ENCODE measurements at regions of chr14 and their contacts with region 1.

Region 1: DNA sequence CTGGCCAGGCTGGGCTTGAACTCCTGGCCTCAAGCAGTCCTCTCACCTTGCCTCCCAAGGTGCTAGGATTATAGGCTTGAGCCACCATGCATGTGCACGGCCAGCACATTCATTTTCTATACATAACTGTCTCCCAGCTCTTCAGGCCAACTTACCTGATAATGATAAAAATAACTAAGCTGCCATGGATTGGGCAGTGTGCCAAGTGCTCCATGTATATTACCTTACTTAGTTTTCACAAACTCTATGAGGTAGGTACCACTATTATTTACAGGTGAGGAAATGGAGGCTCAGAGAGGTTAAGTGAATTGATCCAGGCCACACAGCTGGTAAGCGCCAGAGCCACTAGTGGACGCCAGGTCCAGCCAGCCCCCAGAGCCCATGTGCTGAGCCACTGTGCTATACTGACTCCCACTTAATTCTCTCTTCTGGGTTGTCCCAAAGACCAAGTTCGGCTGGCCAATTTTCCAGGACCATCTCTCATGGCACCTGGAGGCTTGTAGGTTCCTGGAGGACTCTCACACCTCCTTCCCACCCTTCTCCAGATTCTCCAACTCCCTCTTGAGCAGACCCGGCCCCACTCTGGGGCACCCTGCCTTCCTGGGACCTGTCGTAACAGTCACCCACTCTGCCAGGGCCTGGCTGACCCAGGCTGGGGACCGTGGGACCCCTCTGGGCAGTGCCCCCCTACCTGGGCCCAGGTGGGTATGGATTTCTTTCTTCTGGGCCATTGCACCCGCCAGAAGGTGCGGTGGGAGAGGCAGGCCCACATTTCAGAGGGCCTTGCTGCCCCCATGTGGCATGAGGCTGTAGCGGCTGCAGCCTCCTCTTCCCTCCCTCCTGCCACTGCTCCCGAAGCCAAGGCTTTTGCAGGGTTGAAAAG is 30.2 kb upstream of the CIPC start:
- DNase-seq: peak; percentile 27
- H3K4me3 Mint-ChIP-seq: no peak overlapping the region
- H3K27ac Mint-ChIP-seq: no peak overlapping the region
- H3K4me1 Mint-ChIP-seq: no peaks in the 10 kb centered on the region
- H3K27me3 Mint-ChIP-seq: peaks cover 14% of the 10 kb centered on the region

Region 2: DNA sequence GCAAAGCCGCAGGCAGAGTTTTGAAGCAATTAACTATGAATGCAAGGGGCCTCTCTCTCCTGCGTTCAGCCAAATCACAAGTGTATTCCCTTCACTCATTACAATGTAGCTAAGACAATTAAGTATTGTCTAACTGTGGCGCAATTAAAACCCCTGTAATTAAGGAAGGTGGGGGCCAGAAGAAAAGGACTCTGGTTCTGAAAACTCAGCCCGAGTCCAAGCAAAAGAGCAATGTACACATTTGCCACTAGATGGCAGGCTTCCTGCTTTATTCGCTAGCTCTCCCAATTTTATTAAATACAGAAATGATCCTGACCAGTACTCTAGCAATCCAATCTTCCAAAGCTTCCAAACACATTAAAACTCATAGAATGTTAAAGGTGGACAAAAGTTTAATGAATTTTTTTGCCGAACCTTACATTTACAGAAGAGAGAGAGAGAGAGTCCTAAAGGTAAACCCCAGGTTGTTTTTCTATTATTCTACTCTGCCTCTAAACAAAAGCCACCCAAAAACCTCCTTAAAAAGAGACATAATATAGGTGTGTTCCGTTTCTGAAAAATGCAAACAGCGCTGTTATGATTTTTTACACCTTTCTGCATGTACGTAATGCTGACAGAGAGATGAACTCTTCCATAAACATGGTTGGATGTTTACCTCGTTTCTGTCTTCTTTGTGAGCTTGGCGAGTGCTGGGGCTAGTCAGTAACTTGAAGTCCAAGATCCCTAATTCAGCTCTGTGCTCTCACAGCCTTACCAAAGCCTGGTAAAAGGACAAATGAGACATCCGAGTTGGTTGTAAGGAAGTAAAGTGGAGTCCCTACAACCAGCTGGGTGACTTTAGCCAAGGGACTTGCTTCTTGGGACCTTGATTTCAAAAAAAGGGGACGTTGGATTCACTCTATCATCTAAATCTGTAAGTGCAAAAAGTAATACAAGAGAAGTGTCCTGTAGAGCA is 357.5 kb before region 1 on chr14:
- intact Hi-C with region 1: loop called (anchors 1 kb)
- DNase-seq: no peak
- H3K4me3 Mint-ChIP-seq: no peak overlapping the region
- H3K27ac Mint-ChIP-seq: no peak overlapping the region
- H3K4me1 Mint-ChIP-seq: no peaks in the 10 kb centered on the region
- H3K27me3 Mint-ChIP-seq: peaks cover 14% of the 10 kb centered on the region

Region 3: GRCh38 chr14:76917158-76917596 is 150.7 kb before region 1 on chr14:
- intact Hi-C with region 1: loop called (anchors 1 kb)
- DNase-seq: no peak
- H3K4me3 Mint-ChIP-seq: no peak overlapping the region
- H3K27ac Mint-ChIP-seq: no peak overlapping the region
- H3K4me1 Mint-ChIP-seq: peaks cover 51% of the 10 kb centered on the region
- H3K27me3 Mint-ChIP-seq: no peaks in the 10 kb centered on the region

Measured in activated T-helper 1 cell treated with anti-CD3 and anti-CD28 coated beads, Interleukin-12 subunit alpha, Interleukin-12 subunit beta, Interleukin-2, Interleukin-4 antibody, amounts not matched to agents 30 ng/mL and 10 ng/mL and 1 ng/mL, durations not matched to agents 14 hours and 24 hours and 36 hours (primary cell).